PC-3 (cell line): ENCODE measurements at regions of chr10 and their contacts with region 1.

Region 1: DNA sequence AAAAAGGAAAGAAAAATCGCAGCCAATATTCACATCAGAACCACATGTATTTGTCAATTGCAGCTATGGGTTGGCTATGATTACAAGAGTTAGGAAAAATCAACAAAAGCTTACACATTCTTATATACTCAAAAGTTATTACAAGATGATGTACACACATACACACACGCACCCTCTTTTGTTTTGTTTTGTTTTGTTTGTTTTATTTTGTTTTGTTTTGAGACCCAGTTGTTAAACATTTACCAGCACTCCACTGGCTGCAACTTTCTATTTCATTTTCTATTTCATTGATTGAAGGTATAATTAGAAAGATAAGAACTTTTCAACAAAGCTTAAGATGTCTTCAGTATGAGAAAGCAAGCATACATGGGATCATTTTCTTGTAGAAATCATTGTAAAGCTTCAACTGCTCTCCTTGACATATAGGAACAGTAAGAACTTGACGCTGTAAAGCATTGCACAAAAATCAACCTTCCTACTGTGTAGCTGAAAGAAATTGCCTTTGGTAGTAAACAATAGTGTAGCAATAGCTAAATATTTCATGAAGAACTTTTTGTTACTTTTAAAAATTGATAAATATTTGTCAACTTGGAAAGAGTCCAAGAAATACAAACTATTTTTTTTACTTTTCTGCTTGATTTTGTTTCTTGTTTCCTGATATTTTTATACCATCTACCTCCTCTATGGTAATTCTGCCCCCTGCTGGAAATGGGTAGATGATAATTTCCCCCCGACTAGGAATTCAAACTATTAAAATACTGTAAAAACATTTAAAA is 205.9 kb downstream of the MBL2 start:
- DNase-seq: peak; percentile 98
- ATAC-seq: peak; percentile 65
- H3K4me3 ChIP-seq: peak overlapping the region; percentile 39
- H3K27ac ChIP-seq: peak overlapping the region; percentile 49
- H3K4me1 ChIP-seq: peaks cover 42% of the 10 kb centered on the region
- H3K27me3 ChIP-seq: no peaks in the 10 kb centered on the region
- CTCF ChIP-seq: peak; percentile 100

Region 2: DNA sequence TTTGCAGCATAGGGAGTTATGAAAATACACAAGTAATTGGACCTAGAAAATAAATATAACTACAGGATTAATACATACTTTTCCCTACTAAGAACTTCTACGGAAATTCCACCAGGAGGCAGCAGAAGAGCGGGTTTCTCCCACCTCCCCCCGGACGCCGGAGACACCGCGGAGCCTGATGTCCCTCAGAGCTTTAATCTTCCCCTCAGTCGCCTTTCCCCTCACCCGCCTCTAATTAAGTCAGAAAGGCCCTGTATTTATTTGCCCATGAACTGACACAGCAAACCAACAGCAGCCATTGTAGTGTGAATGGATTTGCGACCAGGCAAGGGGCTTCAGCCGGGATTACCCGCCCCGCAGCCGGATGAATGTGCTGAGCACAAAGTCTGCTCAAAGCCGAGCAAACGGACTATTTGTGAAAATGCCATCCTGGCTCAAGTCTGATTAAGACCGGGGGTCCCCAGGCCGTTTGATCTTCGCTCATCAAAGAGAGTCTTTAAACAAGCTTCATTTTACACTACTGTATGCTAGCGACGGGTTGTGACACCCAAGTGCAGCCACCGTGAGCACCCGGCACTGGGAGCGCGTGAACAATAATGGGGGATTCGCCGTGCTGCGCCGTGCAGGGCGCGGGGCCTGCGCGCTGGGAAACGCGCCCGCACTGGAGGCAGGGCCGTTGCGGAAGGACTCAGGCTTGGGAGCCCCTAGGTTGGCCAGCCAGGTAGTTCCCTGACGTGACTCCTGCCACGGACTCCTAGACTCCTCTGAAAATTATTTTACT is 258.2 kb before region 1 on chr10:
- CTCF ChIA-PET with region 1: interaction called, 54 read pairs
- POLR2A ChIA-PET with region 1: no interaction called
- intact Hi-C with region 1: loop called (anchors 1 kb)
- DNase-seq: peak; percentile 94
- ATAC-seq: peak; percentile 86
- H3K4me3 ChIP-seq: peak overlapping the region; percentile 55
- H3K27ac ChIP-seq: 0 out of 2 replicates have a peak overlapping the region, but pooled peaks have one; percentile 2
- H3K4me1 ChIP-seq: peaks cover 36% of the 10 kb centered on the region
- H3K27me3 ChIP-seq: no peaks in the 10 kb centered on the region
- CTCF ChIP-seq: peak; percentile 99

Region 3: DNA sequence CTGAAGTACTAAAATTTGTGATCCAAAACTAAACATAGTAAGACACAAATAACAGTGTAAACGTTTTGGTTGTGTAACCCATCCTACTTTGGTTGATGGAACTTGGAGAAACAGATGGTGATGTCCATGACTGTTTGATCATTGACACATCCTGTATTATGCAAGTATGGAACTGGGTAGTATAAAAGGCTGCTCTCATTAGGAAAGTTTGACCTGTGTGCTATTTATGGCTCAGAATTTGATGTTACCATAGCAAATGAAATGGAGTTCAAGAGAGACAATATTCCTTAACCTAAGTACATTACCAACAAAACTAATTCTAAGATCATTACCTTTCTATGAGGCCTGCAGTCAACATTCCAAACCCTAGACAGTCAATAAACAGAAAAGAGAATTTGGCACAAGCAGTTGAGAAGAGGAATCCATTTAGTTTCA is 212.7 kb before region 1 on chr10:
- CTCF ChIA-PET with region 1: no interaction called
- POLR2A ChIA-PET with region 1: no interaction called
- intact Hi-C with region 1: no loop called
- DNase-seq: peak; percentile 49
- ATAC-seq: no peak
- H3K4me3 ChIP-seq: no peak overlapping the region
- H3K27ac ChIP-seq: no peak overlapping the region
- H3K4me1 ChIP-seq: peaks cover 27% of the 10 kb centered on the region
- H3K27me3 ChIP-seq: no peaks in the 10 kb centered on the region
- CTCF ChIP-seq: no peak

Region 4: DNA sequence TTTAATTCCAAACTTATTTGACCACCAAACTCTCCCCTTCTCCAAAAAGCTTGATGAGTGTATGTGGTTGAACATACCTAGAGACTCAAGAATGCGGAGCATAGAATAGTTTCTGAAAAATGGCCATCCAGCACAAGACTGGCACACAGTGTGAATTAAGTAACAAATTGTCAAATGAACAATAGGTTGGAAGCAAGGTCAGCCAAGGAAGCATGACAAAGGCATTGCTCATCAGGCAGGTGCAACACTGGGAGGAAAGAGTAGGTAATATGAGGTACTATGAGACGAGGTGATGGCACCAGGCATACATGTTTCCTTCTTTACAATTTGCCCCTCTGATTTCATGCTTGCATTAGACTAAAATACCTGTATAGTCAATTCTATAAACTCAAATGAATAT is 178.9 kb before region 1 on chr10:
- CTCF ChIA-PET with region 1: no interaction called
- POLR2A ChIA-PET with region 1: no interaction called
- intact Hi-C with region 1: loop called (anchors 5 kb)
- DNase-seq: peak; percentile 99
- ATAC-seq: peak; percentile 94
- H3K4me3 ChIP-seq: no peak overlapping the region
- H3K27ac ChIP-seq: no peak overlapping the region
- H3K4me1 ChIP-seq: peaks cover 19% of the 10 kb centered on the region
- H3K27me3 ChIP-seq: no peaks in the 10 kb centered on the region
- CTCF ChIP-seq: no peak

Region 5: DNA sequence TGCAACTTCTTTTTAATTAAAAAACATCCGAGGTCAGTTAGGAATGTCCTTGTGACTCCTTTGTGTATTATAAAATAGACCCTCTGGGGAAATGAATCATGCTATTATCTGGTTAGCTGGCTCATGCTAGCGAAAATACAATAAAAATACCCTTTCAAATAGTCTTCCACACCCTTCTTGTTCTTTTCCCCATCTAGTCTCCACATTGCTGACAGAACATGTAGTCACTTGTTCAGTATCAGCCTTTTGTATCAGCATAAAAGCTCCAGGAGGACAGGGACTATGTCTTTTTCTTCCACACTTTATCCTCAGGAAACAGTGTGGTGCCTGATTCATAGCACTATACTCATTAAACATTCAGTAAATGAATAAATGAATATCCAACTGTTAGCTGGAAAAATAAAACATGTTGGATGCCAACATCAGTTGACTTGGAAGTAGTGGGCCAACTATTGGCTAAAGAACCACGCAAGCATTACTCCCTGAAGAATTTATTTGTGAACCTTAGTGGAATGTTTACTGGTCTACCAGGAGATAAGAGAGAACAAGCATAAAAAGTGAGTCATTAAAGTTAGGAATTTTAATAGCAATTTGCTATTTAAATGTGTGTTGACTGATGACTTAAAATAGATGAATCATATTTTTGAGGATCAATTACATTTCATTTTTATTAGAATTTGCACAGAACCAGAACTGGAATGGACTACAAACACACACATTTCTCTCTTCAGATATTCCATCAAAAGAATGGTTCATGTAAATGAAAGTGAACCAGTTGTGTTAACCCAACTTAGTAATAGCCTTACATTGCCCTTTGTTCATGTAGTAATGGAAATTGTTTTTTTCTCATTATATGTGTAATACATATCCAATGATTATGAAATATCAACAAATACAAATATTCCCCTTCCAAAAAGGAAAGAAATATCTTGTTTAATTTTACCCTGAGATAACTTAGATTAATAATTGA is 123.0 kb before region 1 on chr10:
- CTCF ChIA-PET with region 1: no interaction called
- POLR2A ChIA-PET with region 1: no interaction called
- intact Hi-C with region 1: loop called (anchors 1 kb)
- DNase-seq: peak; percentile 100
- ATAC-seq: peak; percentile 80
- H3K4me3 ChIP-seq: peak overlapping the region; percentile 36
- H3K27ac ChIP-seq: peak overlapping the region; percentile 82
- H3K4me1 ChIP-seq: peaks cover 62% of the 10 kb centered on the region
- H3K27me3 ChIP-seq: no peaks in the 10 kb centered on the region
- CTCF ChIP-seq: no peak

Region 6: DNA sequence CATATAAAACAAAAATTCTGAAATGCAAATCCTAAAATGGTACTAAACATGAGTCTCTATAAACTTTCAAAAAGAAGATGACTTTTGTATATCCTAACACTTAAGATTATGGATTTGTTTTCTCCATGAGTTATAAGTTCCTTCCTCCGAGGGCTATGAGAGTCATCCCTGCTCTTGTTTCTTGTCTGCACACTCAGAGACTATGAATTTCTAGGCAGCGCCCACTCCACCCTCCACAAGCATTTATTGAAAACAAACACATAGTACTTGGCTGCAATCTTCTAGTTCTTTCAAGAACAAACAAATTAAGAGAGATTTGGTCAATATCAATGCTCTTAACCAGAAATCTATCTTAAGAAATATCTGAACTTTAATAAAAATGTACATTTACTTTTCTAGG is 40.9 kb before region 1 on chr10:
- CTCF ChIA-PET with region 1: no interaction called
- POLR2A ChIA-PET with region 1: no interaction called
- intact Hi-C with region 1: loop called (anchors 1 kb)
- DNase-seq: peak; percentile 89
- ATAC-seq: peak; percentile 98
- H3K4me3 ChIP-seq: no peak overlapping the region
- H3K27ac ChIP-seq: peak overlapping the region; percentile 1; the same call in 1 of the 2 replicates
- H3K4me1 ChIP-seq: peaks cover 21% of the 10 kb centered on the region
- H3K27me3 ChIP-seq: no peaks in the 10 kb centered on the region
- CTCF ChIP-seq: no peak

Region 7: GRCh38 chr10:52539463-52539862 is 27.2 kb before region 1 on chr10:
- CTCF ChIA-PET with region 1: no interaction called
- POLR2A ChIA-PET with region 1: no interaction called
- intact Hi-C with region 1: no loop called
- DNase-seq: peak; percentile 100
- ATAC-seq: peak; percentile 95
- H3K4me3 ChIP-seq: peak overlapping the region; percentile 8
- H3K27ac ChIP-seq: peak overlapping the region; percentile 4; the same call in 1 of the 2 replicates
- H3K4me1 ChIP-seq: peaks cover 33% of the 10 kb centered on the region
- H3K27me3 ChIP-seq: no peaks in the 10 kb centered on the region
- CTCF ChIP-seq: no peak

Region 8: DNA sequence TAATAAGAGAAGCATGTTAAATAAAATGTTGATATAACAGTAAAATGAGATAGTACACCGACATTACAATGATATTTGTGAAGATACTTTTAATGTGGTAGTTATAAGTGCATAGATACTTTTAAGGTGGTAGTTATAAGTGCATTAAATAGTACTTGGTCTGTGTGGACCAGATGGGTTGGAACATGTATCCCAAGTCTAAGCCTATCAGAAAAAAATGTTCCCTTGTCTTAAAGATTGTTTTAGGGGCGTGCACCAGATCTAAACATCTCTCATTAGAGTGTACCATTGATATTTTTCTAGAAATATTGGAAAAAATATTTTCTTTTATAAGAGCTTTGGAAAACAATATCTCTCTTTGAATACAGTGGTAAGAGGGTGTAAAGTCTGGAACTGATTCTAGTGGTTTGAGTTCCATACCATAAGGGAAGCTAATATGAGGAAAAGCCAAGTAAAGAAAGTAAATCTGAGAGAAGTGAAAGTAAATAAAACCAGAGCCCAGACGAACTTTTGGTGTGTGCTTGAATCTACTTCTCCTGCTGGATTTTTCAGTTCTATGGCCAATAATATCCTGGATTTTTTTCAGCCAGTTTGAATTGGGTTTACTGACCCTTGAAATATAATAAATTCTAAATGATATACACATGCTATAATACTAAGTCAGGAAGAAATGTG is 30.7 kb after region 1 on chr10:
- CTCF ChIA-PET with region 1: interaction called, 3 read pairs
- POLR2A ChIA-PET with region 1: no interaction called
- intact Hi-C with region 1: loop called (anchors 1 kb)
- DNase-seq: peak; percentile 52
- ATAC-seq: peak; percentile 42
- H3K4me3 ChIP-seq: peak overlapping the region; percentile 61
- H3K27ac ChIP-seq: no peak overlapping the region
- H3K4me1 ChIP-seq: peaks cover 24% of the 10 kb centered on the region
- H3K27me3 ChIP-seq: no peaks in the 10 kb centered on the region
- CTCF ChIP-seq: no peak